ENCODE measurements at regions of chr17 and their contacts with region 1.

Region 1: GRCh38 chr17:58112970-58113631 is 29.9 kb downstream of the DYNLL2 start:
- DNase-seq: peak; percentile 76 to 89 (median 83)
- ATAC-seq: peak; percentile 99
- H3K4me3 ChIP-seq: no peak overlapping the region
- H3K4me3 Mint-ChIP-seq: no peak overlapping the region
- H3K27ac ChIP-seq: no peak overlapping the region
- H3K27ac Mint-ChIP-seq: no peak overlapping the region
- H3K4me1 ChIP-seq: no peaks in the 10 kb centered on the region
- H3K4me1 Mint-ChIP-seq: peaks cover 5% of the 10 kb centered on the region
- H3K27me3 ChIP-seq: no peaks in the 10 kb centered on the region
- H3K27me3 Mint-ChIP-seq: peaks cover 24% of the 10 kb centered on the region
- CTCF ChIP-seq: peak; percentile 96

Region 2: DNA sequence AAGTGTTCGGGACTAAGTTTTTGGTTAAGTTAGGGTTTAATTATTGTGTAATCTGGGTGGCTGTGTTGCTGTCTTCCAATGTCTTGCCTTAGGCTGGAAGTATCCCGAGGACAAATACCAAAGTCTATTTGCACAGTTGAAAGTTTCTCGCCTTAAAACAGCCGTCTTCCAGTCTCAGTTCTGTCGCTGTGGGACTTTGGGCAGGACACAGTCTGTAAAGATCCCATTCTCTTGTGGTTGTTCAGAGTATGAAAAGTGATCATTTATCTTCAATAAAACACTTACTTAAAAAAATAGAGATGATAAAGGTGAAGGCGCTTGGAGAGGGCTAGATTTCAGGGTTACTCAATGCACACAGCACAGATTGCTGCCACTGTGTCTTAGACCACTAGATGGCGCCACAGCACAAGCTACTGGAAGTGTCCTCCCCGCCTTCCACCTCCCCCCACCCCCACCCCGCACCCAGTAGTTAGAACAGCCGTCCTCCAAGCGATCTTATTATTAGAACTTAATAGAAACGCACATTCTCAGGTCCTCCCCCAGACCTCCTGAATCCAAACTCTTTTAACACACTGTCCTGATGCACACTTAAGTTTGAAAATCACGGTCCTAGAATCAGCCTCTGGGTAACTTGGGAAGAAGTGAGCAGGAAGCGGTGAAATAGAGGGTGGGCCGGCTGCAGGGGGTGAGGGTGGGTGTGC is 982.2 kb before region 1 on chr17:
- CTCF ChIA-PET with region 1: no interaction called
- POLR2A ChIA-PET with region 1: no interaction called
- intact Hi-C with region 1: loop called in 1 of 2 experiments (anchors 1 kb)
- DNase-seq: peak; percentile 71 to 88 (median 85)
- ATAC-seq: peak; percentile 95
- H3K4me3 ChIP-seq: no peak overlapping the region
- H3K4me3 Mint-ChIP-seq: no peak overlapping the region
- H3K27ac ChIP-seq: no peak overlapping the region
- H3K27ac Mint-ChIP-seq: no peak overlapping the region
- H3K4me1 ChIP-seq: peaks cover 3% of the 10 kb centered on the region
- H3K4me1 Mint-ChIP-seq: peaks cover 9% of the 10 kb centered on the region
- H3K27me3 ChIP-seq: no peaks in the 10 kb centered on the region
- H3K27me3 Mint-ChIP-seq: no peaks in the 10 kb centered on the region
- CTCF ChIP-seq: peak; percentile 83

Region 3: GRCh38 chr17:57892146-57892828 is 220.8 kb before region 1 on chr17:
- CTCF ChIA-PET with region 1: interaction called, 14 read pairs
- POLR2A ChIA-PET with region 1: no interaction called
- intact Hi-C with region 1: loop called (anchors 1 kb)
- DNase-seq: peak; percentile 56 to 85 (median 76)
- ATAC-seq: peak; percentile 98
- H3K4me3 ChIP-seq: no peak overlapping the region
- H3K4me3 Mint-ChIP-seq: no peak overlapping the region
- H3K27ac ChIP-seq: no peak overlapping the region
- H3K27ac Mint-ChIP-seq: no peak overlapping the region
- H3K4me1 ChIP-seq: peaks cover 4% of the 10 kb centered on the region
- H3K4me1 Mint-ChIP-seq: peaks cover 6% of the 10 kb centered on the region
- H3K27me3 ChIP-seq: peaks cover 0 to 2% of the 10 kb centered on the region in 2 experiments
- H3K27me3 Mint-ChIP-seq: peaks cover 3% of the 10 kb centered on the region
- CTCF ChIP-seq: peak; percentile 75

Region 4: GRCh38 chr17:57995076-57995956 is 117.8 kb before region 1 on chr17:
- CTCF ChIA-PET with region 1: interaction called, 26 read pairs
- POLR2A ChIA-PET with region 1: no interaction called
- intact Hi-C with region 1: loop called (anchors 2 kb)
- DNase-seq: peak; percentile 13 to 81 (median 51)
- ATAC-seq: peak; percentile 92
- H3K4me3 ChIP-seq: no peak overlapping the region
- H3K4me3 Mint-ChIP-seq: peak overlapping the region; percentile 1
- H3K27ac ChIP-seq: peak overlapping the region in 1 of 2 experiments; percentile 43
- H3K27ac Mint-ChIP-seq: peak overlapping the region; percentile 72
- H3K4me1 ChIP-seq: peaks cover 13% of the 10 kb centered on the region
- H3K4me1 Mint-ChIP-seq: peaks cover 46% of the 10 kb centered on the region
- H3K27me3 ChIP-seq: no peaks in the 10 kb centered on the region
- H3K27me3 Mint-ChIP-seq: no peaks in the 10 kb centered on the region
- CTCF ChIP-seq: peak; percentile 56

Region 5: GRCh38 chr17:58089115-58089514 is 24.0 kb before region 1 on chr17:
- CTCF ChIA-PET with region 1: interaction called, 10 read pairs
- POLR2A ChIA-PET with region 1: no interaction called
- intact Hi-C with region 1: loop called (anchors 1 kb)
- DNase-seq: no peak
- ATAC-seq: no peak
- H3K4me3 ChIP-seq: no peak overlapping the region
- H3K4me3 Mint-ChIP-seq: no peak overlapping the region
- H3K27ac ChIP-seq: no peak overlapping the region
- H3K27ac Mint-ChIP-seq: no peak overlapping the region
- H3K4me1 ChIP-seq: peaks cover 39% of the 10 kb centered on the region
- H3K4me1 Mint-ChIP-seq: peaks cover 69% of the 10 kb centered on the region
- H3K27me3 ChIP-seq: no peaks in the 10 kb centered on the region
- H3K27me3 Mint-ChIP-seq: no peaks in the 10 kb centered on the region
- CTCF ChIP-seq: no peak

Region 6: GRCh38 chr17:58352014-58352842 is 239.1 kb after region 1 on chr17 and contains the start of gene SUPT4H1:
- CTCF ChIA-PET with region 1: no interaction called
- POLR2A ChIA-PET with region 1: no interaction called
- intact Hi-C with region 1: no loop called
- DNase-seq: peak; percentile 81 to 97 (median 91)
- ATAC-seq: peak; percentile 88
- H3K4me3 ChIP-seq: peak within 1 kb of the TSS; percentile 69 to 70
- H3K4me3 Mint-ChIP-seq: peak within 1 kb of the TSS; percentile 100
- H3K27ac ChIP-seq: peak within 1 kb of the TSS; percentile 75 to 81
- H3K27ac Mint-ChIP-seq: peak within 1 kb of the TSS; percentile 100
- H3K4me1 ChIP-seq: peaks cover 46% of the 10 kb centered on the region
- H3K4me1 Mint-ChIP-seq: peaks cover 60% of the 10 kb centered on the region
- H3K27me3 ChIP-seq: no peaks in the 10 kb centered on the region
- H3K27me3 Mint-ChIP-seq: no peaks in the 10 kb centered on the region
- CTCF ChIP-seq: no peak
- total RNA-seq, gene SUPT4H1: 45.2 to 59.7 TPM

Measured in CD8-positive, alpha-beta T cell (primary cell).